A673 (cell line): ENCODE measurements at regions of chrX and their contacts with region 1.

Region 1: DNA sequence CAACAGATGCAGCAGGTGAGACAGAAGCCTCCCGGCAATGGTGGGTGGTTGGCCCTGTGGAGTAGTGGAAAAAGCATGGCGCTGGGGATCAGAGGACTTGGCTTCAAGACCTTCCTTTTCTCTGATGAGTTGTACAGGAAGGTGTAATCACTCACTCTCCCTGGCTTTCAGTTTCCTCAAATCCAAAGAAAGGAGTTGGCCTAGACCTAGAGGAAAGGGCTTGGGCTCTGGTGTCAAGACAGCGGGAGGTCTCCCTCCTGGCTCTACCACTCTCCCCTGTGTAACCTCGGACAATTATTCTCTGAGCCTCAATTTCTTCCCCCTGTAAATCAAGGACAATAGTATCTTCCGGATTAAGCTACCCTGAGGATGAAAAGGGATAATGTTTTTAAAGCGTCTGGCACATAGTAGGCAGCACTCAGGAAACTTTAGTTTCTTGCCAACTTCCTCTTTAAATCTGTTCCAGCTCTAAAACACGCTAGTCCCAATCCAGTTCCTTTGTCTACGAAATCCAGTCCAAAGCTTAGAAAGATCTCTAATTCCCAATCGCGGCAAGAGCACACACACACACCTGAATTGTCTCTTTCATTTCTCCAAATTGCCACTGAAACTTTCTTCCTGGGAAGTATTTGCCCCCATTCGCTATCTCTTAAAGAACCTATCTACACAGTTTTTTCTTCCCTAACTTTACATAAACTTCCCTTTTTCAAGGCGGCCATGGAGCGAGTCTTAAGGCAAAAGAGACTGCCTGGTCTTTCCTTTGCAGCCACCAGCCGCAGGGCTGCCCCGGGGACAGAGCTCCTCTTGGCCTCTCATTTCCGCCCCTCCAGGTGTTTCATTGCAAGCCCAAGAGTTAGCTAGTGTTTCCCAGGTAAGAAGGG is 29.9 kb upstream of the GPC4 start:
- DNase-seq: peak; percentile 57
- H3K4me3 ChIP-seq: peak overlapping the region; percentile 38
- H3K27ac ChIP-seq: no peak overlapping the region
- H3K4me1 ChIP-seq: no peaks in the 10 kb centered on the region
- H3K27me3 ChIP-seq: no peaks in the 10 kb centered on the region
- CTCF ChIP-seq: no peak

Region 2: GRCh38 chrX:133250184-133251100 is 194.7 kb before region 1 on chrX:
- CTCF ChIA-PET with region 1: no interaction called
- POLR2A ChIA-PET with region 1: interaction called, 10 read pairs
- intact Hi-C with region 1: no loop called
- DNase-seq: no peak
- H3K4me3 ChIP-seq: no peak overlapping the region
- H3K27ac ChIP-seq: no peak overlapping the region
- H3K4me1 ChIP-seq: no peaks in the 10 kb centered on the region
- H3K27me3 ChIP-seq: no peaks in the 10 kb centered on the region
- CTCF ChIP-seq: no peak